ENCODE measurements at regions of chr1 and their contacts with region 1.

Region 1: DNA sequence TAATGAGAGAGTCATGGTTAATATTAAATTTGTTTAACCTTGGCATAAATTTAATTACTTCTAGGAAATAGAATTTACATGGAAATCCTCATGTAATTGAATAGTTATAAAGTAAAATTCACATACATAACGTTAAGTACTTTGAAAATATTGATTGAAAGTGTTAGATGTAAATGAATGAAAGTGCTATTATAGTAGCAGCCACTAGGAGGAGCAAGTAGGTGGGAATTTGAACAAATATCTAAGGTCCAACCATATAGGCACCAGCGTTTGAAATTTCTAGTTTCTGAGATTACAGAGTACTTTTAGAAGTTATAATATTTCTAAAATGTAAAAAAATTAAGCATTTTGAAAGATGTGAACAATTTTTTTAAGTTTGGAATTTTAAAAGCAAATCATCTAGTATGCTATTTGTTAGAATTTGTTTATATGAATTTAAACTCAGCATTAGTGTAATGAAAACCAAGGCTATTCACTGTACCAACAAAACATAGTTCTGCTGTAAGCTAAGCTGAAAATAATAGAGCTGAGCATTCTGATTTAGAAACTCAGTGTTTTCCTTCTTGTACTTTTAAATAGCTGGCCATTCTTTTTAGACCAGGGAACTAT is 3.3 kb downstream of the B3GALT2 start:
- DNase-seq: peak in 1 of 2 donors; percentile 78
- ATAC-seq: peak; percentile 74 to 83 (median 83)
- H3K4me3 ChIP-seq: no peak overlapping the region
- H3K4me3 Mint-ChIP-seq: no peak overlapping the region
- H3K27ac ChIP-seq: no peak overlapping the region
- H3K27ac Mint-ChIP-seq: no peak overlapping the region
- H3K4me1 ChIP-seq: peaks cover 3% of the 10 kb centered on the region
- H3K4me1 Mint-ChIP-seq: peaks cover 27 to 38% of the 10 kb centered on the region in 2 donors
- H3K27me3 ChIP-seq: no peaks in the 10 kb centered on the region
- H3K27me3 Mint-ChIP-seq: no peaks in the 10 kb centered on the region
- CTCF ChIP-seq: peak; percentile 93

Region 2: GRCh38 chr1:193144999-193145398 is 38.1 kb before region 1 on chr1:
- intact Hi-C with region 1: no loop called
- DNase-seq: no peak
- ATAC-seq: no peak
- H3K4me3 ChIP-seq: no peak overlapping the region
- H3K4me3 Mint-ChIP-seq: no peak overlapping the region
- H3K27ac ChIP-seq: no peak overlapping the region
- H3K27ac Mint-ChIP-seq: no peak overlapping the region
- H3K4me1 ChIP-seq: no peaks in the 10 kb centered on the region
- H3K4me1 Mint-ChIP-seq: peaks cover 0 to 11% of the 10 kb centered on the region in 2 donors
- H3K27me3 ChIP-seq: no peaks in the 10 kb centered on the region
- H3K27me3 Mint-ChIP-seq: no peaks in the 10 kb centered on the region
- CTCF ChIP-seq: no peak

Region 3: GRCh38 chr1:193754732-193755427 is 571.8 kb after region 1 on chr1:
- intact Hi-C with region 1: loop called (anchors 10 kb)
- DNase-seq: peak in 1 of 2 donors; percentile 20
- ATAC-seq: no peak
- H3K4me3 ChIP-seq: no peak overlapping the region
- H3K4me3 Mint-ChIP-seq: no peak overlapping the region
- H3K27ac ChIP-seq: no peak overlapping the region
- H3K27ac Mint-ChIP-seq: no peak overlapping the region
- H3K4me1 ChIP-seq: no peaks in the 10 kb centered on the region
- H3K4me1 Mint-ChIP-seq: no peaks in the 10 kb centered on the region
- H3K27me3 ChIP-seq: no peaks in the 10 kb centered on the region
- H3K27me3 Mint-ChIP-seq: no peaks in the 10 kb centered on the region
- CTCF ChIP-seq: no peak

Region 4: GRCh38 chr1:194295685-194296084 is 1112.6 kb after region 1 on chr1:
- intact Hi-C with region 1: loop called (anchors 1 kb)
- DNase-seq: peak in 1 of 2 donors; percentile 84
- ATAC-seq: peak; percentile 46 to 75 (median 54)
- H3K4me3 ChIP-seq: no peak overlapping the region
- H3K4me3 Mint-ChIP-seq: no peak overlapping the region
- H3K27ac ChIP-seq: no peak overlapping the region
- H3K27ac Mint-ChIP-seq: no peak overlapping the region
- H3K4me1 ChIP-seq: no peaks in the 10 kb centered on the region
- H3K4me1 Mint-ChIP-seq: no peaks in the 10 kb centered on the region
- H3K27me3 ChIP-seq: no peaks in the 10 kb centered on the region
- H3K27me3 Mint-ChIP-seq: no peaks in the 10 kb centered on the region
- CTCF ChIP-seq: peak; percentile 42